PC-9 (cell line): ENCODE measurements at regions of chr6 and their contacts with region 1.

Region 1: DNA sequence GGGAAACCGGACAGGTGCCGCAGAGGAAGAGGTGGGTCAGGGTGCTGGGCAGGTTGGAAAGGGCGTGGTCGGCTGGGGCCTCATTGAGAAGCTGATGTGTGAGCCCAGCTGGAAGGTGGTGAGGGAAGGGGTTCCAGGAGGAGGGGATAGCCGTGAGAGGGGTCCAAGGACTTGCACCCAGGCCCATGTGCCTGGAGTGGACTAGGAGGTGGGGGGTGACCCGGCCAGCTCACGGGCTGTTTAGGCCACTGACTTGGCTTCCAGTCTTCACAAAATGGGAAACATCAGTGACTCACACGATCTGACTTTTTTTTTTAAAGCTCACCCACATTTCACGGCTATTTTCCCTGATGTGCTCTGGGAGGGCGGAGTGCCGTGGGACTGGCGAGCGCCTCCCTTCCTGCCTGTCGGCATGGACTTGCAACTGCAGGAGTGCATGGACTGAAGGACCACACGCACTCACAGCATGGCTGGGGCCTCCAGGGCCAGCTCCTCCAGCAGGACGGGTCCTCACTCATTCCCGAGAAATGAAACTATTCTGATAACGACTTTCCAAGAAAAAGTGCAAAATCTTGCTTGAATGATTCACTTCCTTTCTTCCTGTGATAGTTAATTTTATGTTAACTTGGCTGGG is 13.5 kb upstream of the PDE10A start:
- DNase-seq: no peak
- H3K4me3 ChIP-seq: no peak overlapping the region
- H3K27ac ChIP-seq: no peak overlapping the region
- H3K4me1 ChIP-seq: no peaks in the 10 kb centered on the region
- H3K27me3 ChIP-seq: peaks cover 26% of the 10 kb centered on the region; the same call in 1 of the 2 replicates
- CTCF ChIP-seq: no peak

Region 2: DNA sequence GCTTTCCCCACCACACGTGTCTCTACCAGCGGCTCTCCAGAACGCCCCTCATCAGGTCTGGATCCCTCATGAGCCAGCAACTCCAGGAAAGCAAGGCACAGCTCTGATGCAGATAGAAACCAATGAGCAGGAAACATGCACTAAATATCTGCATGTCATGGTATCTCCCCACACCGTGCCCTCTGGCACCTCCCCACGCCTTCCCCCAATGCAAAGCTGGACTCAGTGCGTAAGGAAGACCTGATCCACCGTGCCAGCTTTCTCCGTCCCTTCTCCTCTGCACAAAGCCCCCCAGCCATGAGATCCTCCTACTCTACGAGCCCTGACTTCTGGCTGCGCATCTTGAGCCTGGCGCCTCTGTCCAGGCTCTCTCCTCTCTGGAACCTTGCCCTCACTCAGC is 22.9 kb before region 1 on chr6:
- CTCF ChIA-PET with region 1: no interaction called
- POLR2A ChIA-PET with region 1: no interaction called
- intact Hi-C with region 1: loop called (anchors 2 kb)
- DNase-seq: no peak
- H3K4me3 ChIP-seq: no peak overlapping the region
- H3K27ac ChIP-seq: no peak overlapping the region
- H3K4me1 ChIP-seq: no peaks in the 10 kb centered on the region
- H3K27me3 ChIP-seq: peaks cover 77% of the 10 kb centered on the region
- CTCF ChIP-seq: no peak